ENCODE measurements at regions of chr2 and their contacts with region 1.

Region 1: DNA sequence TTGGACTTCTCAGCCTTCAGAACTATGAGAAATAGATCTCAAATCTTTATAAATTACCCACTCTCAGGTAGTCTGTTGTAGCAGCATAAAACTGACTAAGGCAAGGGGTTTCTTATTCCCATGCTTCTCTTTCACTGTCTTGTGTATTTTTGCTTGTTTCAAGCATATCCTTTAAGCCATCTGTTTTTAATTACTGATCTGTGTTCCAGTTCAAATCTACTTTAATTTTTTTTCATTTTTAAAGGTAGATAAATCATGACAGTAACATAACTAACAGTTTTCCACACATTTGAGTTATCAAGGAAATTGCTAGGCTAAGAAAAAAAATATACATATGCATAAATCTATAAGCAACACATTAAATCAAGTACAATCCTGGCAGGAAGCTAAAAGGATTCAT is 317.9 kb upstream of the TNP1 start:
- DNase-seq: no peak
- ATAC-seq: no peak
- H3K4me3 ChIP-seq: no peak overlapping the region
- H3K27ac ChIP-seq: no peak overlapping the region
- H3K4me1 ChIP-seq: peaks cover 4% of the 10 kb centered on the region
- H3K27me3 ChIP-seq: no peaks in the 10 kb centered on the region
- CTCF ChIP-seq: no peak

Region 2: GRCh38 chr2:216897561-216898203 is 280.0 kb before region 1 on chr2:
- intact Hi-C with region 1: loop called in 1 of 2 experiments (anchors 10 kb)
- DNase-seq: no peak
- ATAC-seq: no peak
- H3K4me3 ChIP-seq: no peak overlapping the region
- H3K27ac ChIP-seq: no peak overlapping the region
- H3K4me1 ChIP-seq: peaks cover 6% of the 10 kb centered on the region
- H3K27me3 ChIP-seq: no peaks in the 10 kb centered on the region
- CTCF ChIP-seq: no peak

Region 3: DNA sequence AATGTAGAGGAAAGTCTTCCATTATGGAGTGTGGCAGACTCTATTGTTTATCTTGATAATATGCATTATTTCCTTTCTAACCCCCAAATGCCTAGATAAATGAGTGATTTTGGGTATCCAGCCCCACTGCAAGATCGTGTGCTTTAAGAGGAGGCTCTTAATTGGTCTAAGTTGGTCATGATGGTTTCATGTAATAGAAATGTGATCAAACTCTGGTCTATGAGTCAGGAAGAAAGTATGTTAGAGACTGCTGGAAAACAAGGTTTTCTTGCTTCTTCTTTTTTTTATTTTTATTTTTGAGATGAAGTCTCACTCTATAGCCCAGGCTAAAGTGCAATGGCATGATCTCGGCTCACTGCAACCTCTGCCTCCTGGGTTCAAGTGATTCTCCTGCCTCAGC is 26.6 kb after region 1 on chr2:
- intact Hi-C with region 1: no loop called
- DNase-seq: no peak
- ATAC-seq: no peak
- H3K4me3 ChIP-seq: no peak overlapping the region
- H3K27ac ChIP-seq: no peak overlapping the region
- H3K4me1 ChIP-seq: peaks cover 15% of the 10 kb centered on the region
- H3K27me3 ChIP-seq: no peaks in the 10 kb centered on the region
- CTCF ChIP-seq: no peak

Region 4: DNA sequence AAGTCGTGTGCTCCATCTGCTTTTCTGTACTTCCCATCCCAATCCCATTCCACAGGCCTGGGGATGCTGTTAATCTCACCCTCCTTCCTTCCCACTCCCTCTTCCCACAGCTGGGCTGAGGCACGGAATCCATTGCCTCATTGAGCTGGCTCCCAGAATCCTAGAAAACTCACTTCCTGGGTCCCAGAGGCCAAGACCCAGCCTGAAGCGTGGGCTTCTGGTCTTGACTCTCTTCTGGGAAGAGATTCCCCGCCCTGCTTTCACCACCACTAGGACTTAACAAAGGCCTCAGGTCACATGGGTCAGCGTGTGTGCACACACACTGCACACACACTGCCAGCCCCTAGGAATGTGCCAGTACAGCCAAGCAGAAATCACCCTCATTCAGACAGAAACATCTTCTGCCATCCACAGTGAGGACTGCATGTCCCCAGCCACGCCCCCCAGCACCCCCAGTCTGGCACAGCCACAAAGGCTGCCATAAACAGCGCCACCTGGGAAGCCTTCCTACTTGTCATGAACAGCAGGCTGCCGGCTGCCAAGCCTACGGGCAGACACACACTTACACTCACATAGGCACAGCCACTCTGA is 659.3 kb after region 1 on chr2:
- intact Hi-C with region 1: no loop called
- DNase-seq: peak; percentile 85 to 96
- ATAC-seq: peak; percentile 12 to 68 (median 46)
- H3K4me3 ChIP-seq: no peak overlapping the region
- H3K27ac ChIP-seq: peak overlapping the region; percentile 89
- H3K4me1 ChIP-seq: peaks cover 98% of the 10 kb centered on the region
- H3K27me3 ChIP-seq: no peaks in the 10 kb centered on the region
- CTCF ChIP-seq: peak; percentile 9

Measured in psoas muscle (tissue), 8 donors.